ENCODE measurements at regions of chrX and their contacts with region 1.

Region 1: GRCh38 chrX:20442597-20442996 is 175.9 kb upstream of the RPS6KA3 start:
- DNase-seq: peak; percentile 80 to 87
- ATAC-seq: peak; percentile 80 to 94 (median 86)
- H3K4me3 ChIP-seq: no peak overlapping the region
- H3K27ac ChIP-seq: no peak overlapping the region
- H3K4me1 ChIP-seq: no peaks in the 10 kb centered on the region
- H3K27me3 ChIP-seq: no peaks in the 10 kb centered on the region
- CTCF ChIP-seq: peak; percentile 69

Region 2: GRCh38 chrX:20053537-20053936 is 389.1 kb before region 1 on chrX:
- intact Hi-C with region 1: loop called in 1 of 2 experiments (anchors 5 kb)
- DNase-seq: no peak
- ATAC-seq: no peak
- H3K4me3 ChIP-seq: no peak overlapping the region
- H3K27ac ChIP-seq: no peak overlapping the region
- H3K4me1 ChIP-seq: no peaks in the 10 kb centered on the region
- H3K27me3 ChIP-seq: peaks cover 0 to 4% (median 0%) of the 10 kb centered on the region in 3 donors
- CTCF ChIP-seq: no peak

Region 3: GRCh38 chrX:20205927-20206708 is 236.5 kb before region 1 on chrX:
- intact Hi-C with region 1: loop called in 1 of 2 experiments (anchors 5 kb)
- DNase-seq: peak; percentile 13 to 62
- ATAC-seq: peak; percentile 85 to 97 (median 90)
- H3K4me3 ChIP-seq: no peak overlapping the region
- H3K27ac ChIP-seq: peak overlapping the region; percentile 64
- H3K4me1 ChIP-seq: peaks cover 21% of the 10 kb centered on the region
- H3K27me3 ChIP-seq: peaks cover 0 to 14% (median 0%) of the 10 kb centered on the region in 3 donors
- CTCF ChIP-seq: no peak

Region 4: GRCh38 chrX:20252381-20253231 is 190.0 kb before region 1 on chrX:
- intact Hi-C with region 1: loop called (anchors 5 to 10 kb)
- DNase-seq: peak; percentile 45 to 58
- ATAC-seq: peak; percentile 68 to 79 (median 74)
- H3K4me3 ChIP-seq: no peak overlapping the region
- H3K27ac ChIP-seq: peak overlapping the region; percentile 51
- H3K4me1 ChIP-seq: peaks cover under 1% of the 10 kb centered on the region
- H3K27me3 ChIP-seq: no peaks in the 10 kb centered on the region
- CTCF ChIP-seq: peak; percentile 50